ENCODE measurements at regions of chr20 and their contacts with region 1.

Region 1: DNA sequence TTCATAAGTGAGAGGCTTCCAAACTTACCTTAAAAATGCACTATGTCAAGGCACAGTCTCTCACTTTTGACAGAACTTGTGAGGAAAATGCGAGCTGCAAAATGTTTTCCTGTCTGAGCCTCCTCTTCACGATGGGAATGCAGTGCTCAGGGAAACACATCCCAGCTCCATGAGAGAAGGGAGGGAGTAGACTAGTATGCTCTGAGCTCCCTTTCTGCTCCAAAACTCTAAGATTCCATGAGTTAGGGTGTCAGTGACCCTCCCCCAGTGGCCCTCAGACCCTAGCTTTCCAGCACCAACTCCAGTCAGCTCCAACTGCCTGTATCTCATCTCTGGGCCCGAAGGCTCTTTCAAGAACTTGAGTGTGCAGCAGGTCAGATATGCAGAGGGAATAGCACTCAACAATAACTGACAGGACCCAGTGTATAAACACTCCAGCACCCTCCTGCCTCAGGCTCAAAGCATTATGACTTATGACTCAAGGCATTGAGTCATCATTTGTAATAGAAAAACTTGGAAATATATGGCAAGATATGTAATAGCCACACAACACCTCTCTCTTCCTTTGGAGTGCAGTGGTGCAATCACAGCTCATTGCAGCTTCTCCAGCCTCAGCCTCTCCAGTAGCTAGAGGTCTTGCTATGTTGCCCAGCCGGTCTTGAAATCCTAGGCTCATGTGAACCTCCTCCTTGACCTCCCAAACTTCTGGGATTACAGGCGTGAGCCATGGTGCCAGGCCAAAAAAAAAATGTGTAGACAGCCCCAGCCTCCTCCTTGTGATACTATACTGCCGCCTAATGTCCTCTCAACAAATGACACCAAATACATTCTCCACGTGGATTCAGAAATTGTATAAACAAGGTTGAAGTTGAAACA is 16.7 kb upstream of the ENTPD6 start:
- DNase-seq: peak in 6 of 9 donors; percentile 21 to 52 (median 46)
- ATAC-seq: peak; percentile 82
- H3K4me3 ChIP-seq: no peak overlapping the region
- H3K4me3 Mint-ChIP-seq: no peak overlapping the region
- H3K27ac ChIP-seq: no peak overlapping the region
- H3K27ac Mint-ChIP-seq: peak overlapping the region in 1 of 9 donors; percentile 38
- H3K4me1 ChIP-seq: no peaks in the 10 kb centered on the region
- H3K4me1 Mint-ChIP-seq: no peaks in the 10 kb centered on the region
- H3K27me3 ChIP-seq: no peaks in the 10 kb centered on the region
- H3K27me3 Mint-ChIP-seq: peaks cover 4 to 27% (median 7%) of the 10 kb centered on the region in 5 donors

Region 2: DNA sequence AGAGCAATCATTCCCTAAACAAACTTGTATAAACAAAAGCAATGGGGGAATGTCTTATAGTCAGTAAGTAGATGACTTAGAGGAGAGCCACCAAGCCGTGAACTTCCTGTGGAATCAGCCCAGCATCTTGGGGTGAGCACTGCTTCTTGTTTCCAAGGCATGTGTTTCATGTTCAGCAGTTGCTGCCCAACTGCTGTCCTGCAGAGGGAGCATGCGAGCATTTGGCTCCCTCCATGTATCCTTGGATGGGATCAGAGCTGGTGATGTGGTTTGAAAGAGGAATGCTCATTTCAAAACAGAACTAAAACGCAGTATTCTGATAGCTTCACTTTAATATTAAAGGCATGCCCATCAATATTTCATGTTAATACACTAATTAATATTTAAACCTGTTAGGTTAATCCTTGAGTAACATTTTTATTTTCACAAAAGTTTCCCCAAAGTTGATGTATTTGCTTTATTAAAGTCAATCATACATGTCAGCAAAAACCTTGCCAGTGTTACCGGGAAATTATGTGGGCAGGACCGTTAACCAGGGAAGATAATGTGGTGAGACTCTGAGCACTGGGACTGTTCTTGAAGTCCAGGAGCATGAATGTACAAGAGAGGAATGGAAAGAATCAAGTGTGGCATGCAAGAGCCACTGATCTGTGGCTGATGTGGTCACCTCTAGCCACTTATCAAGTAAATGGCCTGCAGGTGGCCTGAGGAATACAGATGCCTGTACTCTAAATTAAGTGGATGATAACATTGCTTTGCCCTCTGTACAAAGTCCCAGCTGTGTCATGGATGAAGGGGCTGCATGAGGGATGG is 1018.0 kb before region 1 on chr20:
- CTCF ChIA-PET with region 1: no interaction called
- POLR2A ChIA-PET with region 1: no interaction called
- intact Hi-C with region 1: loop called in 1 of 2 experiments (anchors 2 kb)
- DNase-seq: peak in 2 of 9 donors; percentile 4 to 16
- ATAC-seq: no peak
- H3K4me3 ChIP-seq: no peak overlapping the region
- H3K4me3 Mint-ChIP-seq: no peak overlapping the region
- H3K27ac ChIP-seq: no peak overlapping the region
- H3K27ac Mint-ChIP-seq: peak overlapping the region in 1 of 9 donors; percentile 23
- H3K4me1 ChIP-seq: no peaks in the 10 kb centered on the region
- H3K4me1 Mint-ChIP-seq: peaks cover 0 to 6% (median 4%) of the 10 kb centered on the region in 7 donors
- H3K27me3 ChIP-seq: no peaks in the 10 kb centered on the region
- H3K27me3 Mint-ChIP-seq: peaks cover 0 to 2% (median 0%) of the 10 kb centered on the region in 5 donors

Region 3: DNA sequence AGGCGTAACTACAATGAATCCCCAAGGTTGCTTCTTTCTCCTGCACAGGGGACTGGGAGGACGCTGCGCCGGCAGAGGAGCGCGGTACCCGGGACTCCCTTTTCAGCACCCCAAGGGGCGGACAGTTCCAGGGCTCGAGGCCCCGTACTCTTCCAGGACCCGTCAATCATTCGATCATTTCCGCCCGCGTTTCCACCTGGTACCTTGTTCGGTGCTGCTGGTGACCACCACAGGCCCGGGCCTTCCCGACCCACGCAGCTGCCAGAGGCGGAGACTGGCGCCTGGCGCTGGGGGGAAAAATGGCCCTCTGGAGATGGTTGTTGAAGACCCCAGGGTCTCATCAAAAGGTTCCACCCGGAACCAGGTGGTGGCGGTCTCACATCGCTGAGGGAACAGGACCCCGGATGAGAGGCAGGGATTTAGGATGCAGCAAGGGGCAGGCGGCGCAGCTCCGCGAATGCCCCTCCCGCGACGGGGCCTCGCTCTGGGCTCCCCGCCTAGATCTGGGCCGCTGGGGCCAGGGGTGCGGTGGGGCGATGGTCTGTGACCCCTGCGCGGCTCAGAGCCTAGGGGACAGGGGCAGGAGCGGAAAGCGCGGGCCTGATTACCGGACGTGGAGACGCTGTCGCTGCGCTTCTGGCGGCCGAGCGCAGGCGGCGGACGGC is 97.6 kb before region 1 on chr20:
- CTCF ChIA-PET with region 1: no interaction called
- POLR2A ChIA-PET with region 1: no interaction called
- intact Hi-C with region 1: loop called in 1 of 2 experiments (anchors 1 kb)
- DNase-seq: peak in 6 of 9 donors; percentile 20 to 63 (median 49)
- ATAC-seq: peak; percentile 64
- H3K4me3 ChIP-seq: no peak overlapping the region
- H3K4me3 Mint-ChIP-seq: peak overlapping the region in 4 of 10 donors; percentile 19 to 35 (median 24)
- H3K27ac ChIP-seq: no peak overlapping the region
- H3K27ac Mint-ChIP-seq: no peak overlapping the region
- H3K4me1 ChIP-seq: peaks cover 14 to 21% of the 10 kb centered on the region in 2 donors
- H3K4me1 Mint-ChIP-seq: peaks cover 11 to 37% (median 27%) of the 10 kb centered on the region in 7 donors
- H3K27me3 ChIP-seq: peaks cover 23 to 25% of the 10 kb centered on the region in 2 donors
- H3K27me3 Mint-ChIP-seq: peaks cover 67 to 88% (median 74%) of the 10 kb centered on the region in 5 donors

Region 4: DNA sequence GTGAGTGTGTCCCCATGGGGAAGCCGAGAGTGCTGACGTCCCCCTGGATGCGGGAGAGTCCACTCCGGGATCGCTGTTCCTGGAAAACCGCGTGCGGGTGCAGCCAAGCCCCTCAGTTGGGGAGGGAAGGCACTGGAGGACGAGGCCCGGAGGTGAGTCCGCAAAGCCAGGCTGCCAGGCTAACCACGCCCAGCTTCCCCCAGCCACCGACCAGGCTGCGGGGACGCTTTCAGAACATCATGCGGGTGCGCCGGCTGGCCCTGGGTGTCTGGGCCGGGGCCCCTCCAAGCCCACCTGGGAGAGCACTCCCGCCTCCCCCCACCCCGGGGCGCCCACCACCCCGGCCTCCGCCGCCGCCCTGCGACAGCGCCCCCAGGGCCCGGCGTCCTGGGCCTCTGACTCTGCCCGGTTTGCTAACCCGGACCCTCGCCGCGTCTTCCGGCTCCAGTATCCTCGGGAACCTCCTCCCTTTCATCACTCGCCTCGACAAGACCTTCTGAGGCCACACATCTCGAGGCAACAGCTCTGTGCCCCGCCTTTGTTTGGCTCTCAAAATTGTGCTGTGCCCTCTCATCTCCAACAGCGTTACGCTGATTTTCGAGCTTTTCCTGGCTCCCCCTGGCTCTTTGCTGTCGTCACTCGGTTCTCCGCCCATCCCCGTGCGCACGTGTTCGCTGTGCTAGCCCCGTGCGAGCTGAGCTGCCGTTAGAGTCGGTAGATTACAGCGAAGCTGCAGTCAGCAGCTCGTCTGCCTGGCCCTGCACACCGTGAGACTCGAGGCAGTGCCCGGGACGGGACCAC is 30.4 kb before region 1 on chr20:
- CTCF ChIA-PET with region 1: no interaction called
- POLR2A ChIA-PET with region 1: no interaction called
- intact Hi-C with region 1: no loop called
- DNase-seq: peak; percentile 35 to 82 (median 79)
- ATAC-seq: peak; percentile 94
- H3K4me3 ChIP-seq: peak overlapping the region; percentile 65
- H3K4me3 Mint-ChIP-seq: peak overlapping the region; percentile 84 to 97 (median 90)
- H3K27ac ChIP-seq: peak overlapping the region; percentile 38
- H3K27ac Mint-ChIP-seq: peak overlapping the region in 8 of 9 donors; percentile 73 to 99 (median 90)
- H3K4me1 ChIP-seq: peaks cover 0 to 12% of the 10 kb centered on the region in 2 donors
- H3K4me1 Mint-ChIP-seq: peaks cover 5 to 7% (median 6%) of the 10 kb centered on the region in 7 donors
- H3K27me3 ChIP-seq: no peaks in the 10 kb centered on the region
- H3K27me3 Mint-ChIP-seq: peaks cover 4 to 30% (median 8%) of the 10 kb centered on the region in 5 donors

Measured in naive thymus-derived CD4-positive, alpha-beta T cell (primary cell).